Testis (tissue), 5 donors: ENCODE measurements at regions of chr1 and their contacts with region 1.

Region 1: GRCh38 chr1:153946622-153947241 is at the start of gene DENND4B:
- DNase-seq: peak; percentile 87
- H3K4me3 ChIP-seq: peak within 1 kb of the TSS; percentile 65 to 98
- H3K27ac ChIP-seq: peak within 1 kb of the TSS; percentile 84 to 98
- H3K4me1 ChIP-seq: peaks cover 17% of the 10 kb centered on the region
- H3K27me3 ChIP-seq: no peaks in the 10 kb centered on the region
- CTCF ChIP-seq: peak; percentile 89 to 96 (median 89)
- POLR2A ChIP-seq: no peak
- total RNA-seq, gene DENND4B: 54.5 to 59.0 TPM

Region 2: DNA sequence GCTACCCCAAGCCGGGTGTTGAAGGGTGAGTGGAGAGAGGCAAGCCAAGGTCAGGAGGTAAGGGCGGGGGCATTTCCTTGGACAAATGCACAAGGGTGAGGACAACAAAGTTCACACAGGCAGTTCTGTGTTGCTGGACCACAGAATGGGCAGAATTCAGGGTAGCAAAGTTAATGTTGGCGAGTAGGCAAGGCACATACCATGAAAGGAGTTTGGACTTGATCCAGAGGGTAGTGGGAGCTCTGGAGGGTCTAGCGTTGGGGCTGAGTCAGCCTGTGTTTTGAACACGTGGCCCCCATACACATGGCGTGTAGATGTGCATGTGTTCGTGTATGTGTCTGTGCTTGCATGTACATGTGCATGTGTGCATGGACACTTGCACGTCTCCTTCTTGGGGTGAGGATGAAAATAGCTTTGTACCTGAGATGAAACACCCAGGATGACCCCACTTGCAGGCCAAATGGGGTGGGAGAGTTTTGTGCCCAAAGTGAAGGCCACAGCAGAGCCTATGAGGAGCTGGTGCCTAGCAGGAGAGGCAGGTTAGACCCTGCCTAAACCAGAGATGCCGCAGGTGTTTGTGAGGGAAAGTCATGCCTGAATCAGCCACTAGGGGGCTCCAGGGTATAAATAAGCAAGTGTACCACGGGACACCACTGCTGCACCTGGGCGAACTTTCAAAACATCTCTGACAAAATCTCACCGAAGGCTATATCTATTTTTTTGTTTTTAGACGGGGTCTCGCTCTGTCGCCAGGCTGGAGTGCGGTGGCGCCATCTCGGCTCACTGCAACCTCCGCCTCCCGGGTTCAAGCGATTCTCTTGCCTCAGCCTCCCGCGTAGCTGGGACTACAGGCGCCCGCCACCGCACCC is 149.7 kb before region 1 on chr1:
- intact Hi-C with region 1: loop called (anchors 10 kb)
- DNase-seq: peak; percentile 96
- H3K4me3 ChIP-seq: peak overlapping the region in 1 of 2 donors; percentile 14
- H3K27ac ChIP-seq: no peak overlapping the region
- H3K4me1 ChIP-seq: no peaks in the 10 kb centered on the region
- H3K27me3 ChIP-seq: no peaks in the 10 kb centered on the region
- CTCF ChIP-seq: peak; percentile 89 to 99 (median 93)
- POLR2A ChIP-seq: no peak

Region 3: GRCh38 chr1:154272217-154272998 is 325.7 kb after region 1 on chr1 and contains the start of gene HAX1:
- intact Hi-C with region 1: no loop called
- DNase-seq: peak; percentile 94
- H3K4me3 ChIP-seq: peak within 1 kb of the TSS; percentile 73 to 85
- H3K27ac ChIP-seq: peak within 1 kb of the TSS; percentile 67 to 90
- H3K4me1 ChIP-seq: peaks cover 4% of the 10 kb centered on the region
- H3K27me3 ChIP-seq: no peaks in the 10 kb centered on the region
- CTCF ChIP-seq: peak; percentile 54 to 88 (median 86)
- POLR2A ChIP-seq: no peak
- total RNA-seq, gene HAX1: 92.7 to 98.9 TPM